Kidney (tissue), 22 donors: ENCODE measurements at regions of chr3 and their contacts with region 1.

Region 1: GRCh38 chr3:106609666-106610301 is 741.0 kb upstream of the CBLB start:
- DNase-seq: peak in 4 of 5 donors; percentile 82 to 95 (median 90)
- H3K4me3 ChIP-seq: no peak overlapping the region
- H3K27ac ChIP-seq: no peak overlapping the region
- H3K4me1 ChIP-seq: no peaks in the 10 kb centered on the region
- H3K27me3 ChIP-seq: no peaks in the 10 kb centered on the region
- CTCF ChIP-seq: peak; percentile 72

Region 2: DNA sequence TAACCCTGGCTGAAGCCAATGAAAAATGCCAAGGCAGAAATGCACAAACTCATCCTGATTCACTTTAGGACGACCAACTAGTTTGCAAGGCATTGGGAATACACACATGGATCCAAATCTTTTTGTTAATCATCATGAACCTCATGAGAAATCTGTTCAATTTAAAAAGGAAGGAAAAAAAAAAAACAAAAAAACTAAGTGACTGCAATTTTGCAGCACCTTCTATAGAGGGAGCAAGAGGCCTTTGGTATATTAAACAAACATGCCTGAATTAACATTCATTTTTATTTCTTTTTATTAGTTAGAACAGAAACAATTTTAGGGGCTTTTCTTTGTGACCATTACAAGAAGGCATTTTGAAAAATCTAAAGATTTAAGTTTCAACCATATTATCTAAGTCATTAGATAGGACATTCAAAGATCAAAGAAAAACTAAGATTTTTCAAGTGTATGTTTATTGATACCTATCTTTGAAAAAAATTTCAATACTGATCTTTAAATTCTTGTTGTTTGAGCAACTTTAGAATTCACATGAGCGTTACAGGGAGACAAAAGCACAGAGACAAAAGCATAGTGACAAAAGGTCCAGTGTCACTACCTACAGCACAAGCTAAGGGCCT is 923.4 kb before region 1 on chr3:
- intact Hi-C with region 1: loop called (anchors 10 kb)
- DNase-seq: peak in 1 of 5 donors; percentile 14
- H3K4me3 ChIP-seq: no peak overlapping the region
- H3K27ac ChIP-seq: no peak overlapping the region
- H3K4me1 ChIP-seq: no peaks in the 10 kb centered on the region
- H3K27me3 ChIP-seq: no peaks in the 10 kb centered on the region
- CTCF ChIP-seq: peak; percentile 66